ENCODE measurements at regions of chr15 and their contacts with region 1.

Region 1: DNA sequence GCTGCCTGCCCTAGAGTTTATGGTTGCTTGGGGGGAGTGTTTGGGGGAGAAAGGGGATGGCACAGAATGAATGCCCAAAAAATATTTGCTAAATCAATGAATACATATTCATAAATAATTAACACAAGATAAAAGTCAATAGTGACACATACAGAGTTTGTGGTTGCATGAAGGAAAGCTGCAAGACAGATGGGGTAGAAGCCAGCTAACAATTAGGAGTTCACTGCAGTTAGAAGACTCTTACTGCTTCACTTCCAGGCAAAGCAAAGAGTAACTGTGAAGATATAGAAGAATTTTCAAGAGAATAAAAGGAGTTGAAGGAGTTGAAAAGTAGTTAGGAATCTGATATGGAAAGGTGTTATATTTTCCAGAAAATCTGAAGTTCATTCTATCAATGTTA is 72.4 kb downstream of the ZNF280D start:
- DNase-seq: no peak
- H3K4me3 ChIP-seq: no peak overlapping the region
- H3K27ac ChIP-seq: no peak overlapping the region
- H3K4me1 ChIP-seq: no peaks in the 10 kb centered on the region
- H3K27me3 ChIP-seq: no peaks in the 10 kb centered on the region
- CTCF ChIP-seq: no peak

Region 2: DNA sequence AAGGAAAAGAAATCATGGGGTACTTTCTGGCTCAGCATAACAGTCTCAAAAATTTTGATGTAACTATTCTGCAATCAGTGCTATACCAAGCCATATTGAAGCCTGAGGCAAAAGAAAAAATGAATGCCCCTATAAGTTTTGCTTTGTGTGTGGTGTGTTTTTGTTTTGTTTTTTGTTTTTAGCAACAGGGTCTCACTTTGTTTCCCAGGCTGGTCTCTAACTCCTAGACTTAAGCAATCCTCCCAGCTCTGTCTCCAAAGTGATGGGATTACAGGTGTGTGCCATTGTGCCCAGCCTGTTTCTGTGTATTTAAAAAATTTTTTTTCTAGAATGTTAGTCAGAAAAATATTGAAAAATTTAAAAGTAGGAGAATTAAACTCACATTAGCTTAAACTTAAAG is 20.8 kb before region 1 on chr15:
- CTCF ChIA-PET with region 1: no interaction called
- POLR2A ChIA-PET with region 1: no interaction called
- intact Hi-C with region 1: loop called (anchors 1 kb)
- DNase-seq: no peak
- H3K4me3 ChIP-seq: no peak overlapping the region
- H3K27ac ChIP-seq: no peak overlapping the region
- H3K4me1 ChIP-seq: no peaks in the 10 kb centered on the region
- H3K27me3 ChIP-seq: no peaks in the 10 kb centered on the region
- CTCF ChIP-seq: no peak